Left cardiac atrium (tissue), 4 donors: ENCODE measurements at regions of chr1 and their contacts with region 1.

Region 1: GRCh38 chr1:193059268-193060225 is at the starts of genes RO60 and UCHL5:
- DNase-seq: peak; percentile 97
- ATAC-seq: peak; percentile 97
- total RNA-seq, gene RO60: 51.7 to 58.2 TPM
- total RNA-seq, gene UCHL5: 28.1 to 33.6 TPM

Region 2: GRCh38 chr1:192936313-192937018 is 123.1 kb before region 1 on chr1:
- intact Hi-C with region 1: no loop called
- DNase-seq: no peak
- ATAC-seq: no peak

Region 3: DNA sequence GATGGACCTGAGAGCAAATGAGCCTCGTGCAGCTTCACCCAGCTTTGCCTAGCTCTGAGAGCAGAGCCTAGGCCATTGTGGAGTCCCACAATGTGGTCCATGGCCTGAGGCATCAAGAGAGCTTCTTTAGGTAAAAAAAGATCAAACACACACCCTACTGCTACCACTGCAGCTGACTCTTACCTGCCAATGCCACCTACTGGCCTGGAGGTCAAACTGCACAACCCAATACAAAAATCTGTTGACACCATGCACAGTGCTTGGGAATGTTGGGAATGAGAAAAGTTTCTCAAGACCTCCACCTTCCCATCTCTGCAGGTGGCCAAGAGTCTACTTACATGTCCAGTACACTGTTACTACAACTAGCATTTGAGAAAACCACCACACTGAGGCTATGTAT is 61.0 kb before region 1 on chr1:
- intact Hi-C with region 1: no loop called
- DNase-seq: no peak
- ATAC-seq: no peak

Region 4: GRCh38 chr1:193104906-193105820 is 45.6 kb after region 1 on chr1 and contains the start of gene GLRX2:
- intact Hi-C with region 1: loop called in 1 of 2 experiments (anchors 5 kb)
- DNase-seq: peak; percentile 89
- ATAC-seq: peak; percentile 98
- total RNA-seq, gene GLRX2: 24.5 to 27.0 TPM

Region 5: GRCh38 chr1:193121616-193122593 is 62.4 kb after region 1 on chr1 and contains the start of gene CDC73:
- intact Hi-C with region 1: loop called in 1 of 2 experiments (anchors 5 kb)
- DNase-seq: peak; percentile 98
- ATAC-seq: peak; percentile 99
- total RNA-seq, gene CDC73: 40.4 to 42.8 TPM